ENCODE measurements at regions of chr9 and their contacts with region 1.

Region 1: GRCh38 chr9:84966876-84967833 is 297.6 kb downstream of the NTRK2 start:
- DNase-seq: no peak
- H3K4me3 ChIP-seq: no peak overlapping the region
- H3K27ac ChIP-seq: no peak overlapping the region
- H3K4me1 ChIP-seq: peaks cover 30% of the 10 kb centered on the region
- H3K27me3 ChIP-seq: no peaks in the 10 kb centered on the region
- CTCF ChIP-seq: no peak

Region 2: DNA sequence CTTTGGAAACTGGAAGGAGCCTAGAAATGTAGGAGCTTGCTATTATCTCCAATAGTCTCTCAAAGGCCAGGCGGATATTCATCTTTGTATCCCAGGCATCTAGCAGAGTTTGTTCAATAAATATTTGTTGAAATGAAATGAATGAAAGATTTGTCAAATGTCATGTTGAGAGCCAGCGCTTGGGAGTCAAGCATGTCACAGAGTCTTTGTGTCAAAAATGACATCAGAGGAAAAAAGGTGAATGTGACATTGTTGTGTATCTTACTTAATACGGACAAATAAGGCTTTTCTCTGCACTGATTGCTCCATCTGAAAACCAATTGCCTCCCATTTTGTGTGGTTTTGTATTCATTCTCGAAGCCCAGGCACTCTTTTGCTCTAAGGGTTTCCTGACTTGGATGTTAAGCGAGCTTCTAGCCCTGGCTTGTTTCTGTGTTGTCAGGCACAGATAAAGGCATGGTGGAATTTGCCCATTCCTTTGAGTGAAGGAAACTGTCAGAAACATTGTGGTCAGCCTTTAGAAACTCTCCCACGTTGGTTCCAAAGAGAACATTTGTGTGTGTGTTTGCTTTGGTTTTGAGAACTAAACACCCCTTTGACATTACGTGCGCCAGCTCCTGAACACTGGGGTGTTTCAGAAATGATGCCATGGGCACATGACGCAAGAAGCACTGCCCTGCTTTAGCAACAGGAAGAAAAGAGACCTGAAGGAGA is 23.1 kb after region 1 on chr9:
- CTCF ChIA-PET with region 1: no interaction called
- dilution Hi-C with region 1: no loop called
- in situ Hi-C with region 1: no loop called
- intact Hi-C with region 1: loop called (anchors 2 kb)
- DNase-seq: peak; percentile 98
- H3K4me3 ChIP-seq: no peak overlapping the region
- H3K27ac ChIP-seq: peak overlapping the region; percentile 90
- H3K4me1 ChIP-seq: peaks cover 27% of the 10 kb centered on the region
- H3K27me3 ChIP-seq: no peaks in the 10 kb centered on the region
- CTCF ChIP-seq: no peak

Region 3: DNA sequence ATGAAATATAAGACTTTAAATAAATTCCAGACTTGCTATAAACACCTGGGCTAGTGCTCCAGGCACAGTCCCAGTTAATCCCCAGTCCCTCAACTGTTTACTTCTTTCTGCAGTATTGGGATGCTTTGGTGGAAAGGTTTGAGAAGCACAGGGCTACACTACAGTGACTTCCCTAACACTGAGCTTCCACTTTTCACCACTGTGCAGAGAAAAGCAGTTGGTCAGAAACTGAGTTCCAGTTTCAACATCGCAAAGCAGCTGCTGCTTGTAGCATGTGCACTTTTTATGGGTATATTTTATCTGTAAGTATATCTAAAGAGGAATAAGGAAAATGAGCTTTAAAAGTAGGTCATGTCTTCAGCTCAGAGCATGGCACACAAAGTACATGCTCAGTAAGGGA is 42.1 kb after region 1 on chr9:
- CTCF ChIA-PET with region 1: no interaction called
- dilution Hi-C with region 1: loop called (anchors 5 kb)
- in situ Hi-C with region 1: no loop called
- intact Hi-C with region 1: no loop called
- DNase-seq: no peak
- H3K4me3 ChIP-seq: no peak overlapping the region
- H3K27ac ChIP-seq: no peak overlapping the region
- H3K4me1 ChIP-seq: peaks cover 7% of the 10 kb centered on the region
- H3K27me3 ChIP-seq: peaks cover 4% of the 10 kb centered on the region
- CTCF ChIP-seq: no peak